Activated B cell treated with CpG ODN at 0.5 μM for 24 hours (primary cell): ENCODE measurements at regions of chr16 and their contacts with region 1.

Region 1: DNA sequence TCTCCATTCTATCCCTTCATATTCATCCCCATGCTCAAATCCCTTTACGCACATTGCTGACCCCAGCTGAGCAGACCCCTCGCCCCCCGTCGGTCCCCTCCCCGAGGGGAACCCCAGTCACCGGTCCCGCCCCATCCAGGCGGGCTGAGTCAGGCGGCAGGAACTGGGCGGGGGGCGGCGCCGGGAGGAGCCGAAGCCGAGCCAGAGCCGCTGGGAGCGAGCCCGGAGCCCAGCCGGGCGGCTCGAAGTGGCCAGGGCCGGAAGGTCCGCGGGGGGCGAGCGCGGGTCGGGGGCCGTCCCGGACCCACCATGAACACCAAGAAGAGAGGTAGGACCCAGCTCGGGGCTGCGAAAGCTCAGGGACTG is 8.6 kb downstream of the RIPOR1 start:
- DNase-seq: no peak
- ATAC-seq: peak; percentile 47
- H3K4me3 Mint-ChIP-seq: peak overlapping the region; percentile 90
- H3K27ac Mint-ChIP-seq: peak overlapping the region; percentile 93
- H3K4me1 Mint-ChIP-seq: peaks cover 82% of the 10 kb centered on the region
- H3K27me3 Mint-ChIP-seq: no peaks in the 10 kb centered on the region
- CTCF ChIP-seq: no peak

Region 2: GRCh38 chr16:67470359-67470758 is 66.9 kb before region 1 on chr16:
- CTCF ChIA-PET with region 1: no interaction called
- POLR2A ChIA-PET with region 1: no interaction called
- intact Hi-C with region 1: no loop called
- DNase-seq: no peak
- ATAC-seq: no peak
- H3K4me3 Mint-ChIP-seq: no peak overlapping the region
- H3K27ac Mint-ChIP-seq: no peak overlapping the region
- H3K4me1 Mint-ChIP-seq: peaks cover 60% of the 10 kb centered on the region
- H3K27me3 Mint-ChIP-seq: no peaks in the 10 kb centered on the region
- CTCF ChIP-seq: no peak

Region 3: DNA sequence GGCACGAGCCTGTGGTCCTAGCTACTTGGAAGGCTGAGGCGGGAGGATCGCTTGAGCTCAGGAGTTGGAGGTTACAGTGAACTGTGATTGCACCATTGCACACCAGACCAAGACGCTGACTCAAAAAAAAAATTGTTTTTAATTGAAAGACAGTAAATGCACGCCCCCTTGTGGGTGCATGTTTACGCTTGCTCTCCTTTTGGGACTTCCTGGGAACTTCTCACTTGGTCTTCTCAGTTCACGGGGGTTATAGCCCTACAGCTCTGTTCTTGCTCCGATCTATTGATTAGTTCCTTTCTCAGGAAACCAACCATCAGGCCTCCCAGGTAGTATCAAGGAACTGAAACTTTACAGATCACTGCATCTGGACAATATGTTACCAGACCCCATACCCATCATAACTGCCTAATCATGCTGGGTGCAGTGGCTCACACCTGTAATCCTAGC is 22.8 kb before region 1 on chr16:
- CTCF ChIA-PET with region 1: interaction called, 4 read pairs
- POLR2A ChIA-PET with region 1: interaction called, 79 read pairs
- intact Hi-C with region 1: no loop called
- DNase-seq: no peak
- ATAC-seq: peak; percentile 23
- H3K4me3 Mint-ChIP-seq: peak overlapping the region; percentile 60
- H3K27ac Mint-ChIP-seq: peak overlapping the region; percentile 94
- H3K4me1 Mint-ChIP-seq: peaks cover 73% of the 10 kb centered on the region
- H3K27me3 Mint-ChIP-seq: no peaks in the 10 kb centered on the region
- CTCF ChIP-seq: no peak